ENCODE measurements at regions of chr9 and their contacts with region 1.

Region 1: GRCh38 chr9:35732122-35732799 is at the starts of genes CREB3 and TLN1:
- DNase-seq: peak; percentile 98
- H3K4me3 Mint-ChIP-seq: no peak within 1 kb of the TSS
- H3K27ac Mint-ChIP-seq: peak within 1 kb of the TSS; percentile 85
- H3K4me1 Mint-ChIP-seq: peaks cover 20% of the 10 kb centered on the region
- H3K27me3 Mint-ChIP-seq: no peaks in the 10 kb centered on the region
- total RNA-seq, gene CREB3: 18.1 to 18.3 TPM
- total RNA-seq, gene TLN1: 362 to 422 TPM

Region 2: DNA sequence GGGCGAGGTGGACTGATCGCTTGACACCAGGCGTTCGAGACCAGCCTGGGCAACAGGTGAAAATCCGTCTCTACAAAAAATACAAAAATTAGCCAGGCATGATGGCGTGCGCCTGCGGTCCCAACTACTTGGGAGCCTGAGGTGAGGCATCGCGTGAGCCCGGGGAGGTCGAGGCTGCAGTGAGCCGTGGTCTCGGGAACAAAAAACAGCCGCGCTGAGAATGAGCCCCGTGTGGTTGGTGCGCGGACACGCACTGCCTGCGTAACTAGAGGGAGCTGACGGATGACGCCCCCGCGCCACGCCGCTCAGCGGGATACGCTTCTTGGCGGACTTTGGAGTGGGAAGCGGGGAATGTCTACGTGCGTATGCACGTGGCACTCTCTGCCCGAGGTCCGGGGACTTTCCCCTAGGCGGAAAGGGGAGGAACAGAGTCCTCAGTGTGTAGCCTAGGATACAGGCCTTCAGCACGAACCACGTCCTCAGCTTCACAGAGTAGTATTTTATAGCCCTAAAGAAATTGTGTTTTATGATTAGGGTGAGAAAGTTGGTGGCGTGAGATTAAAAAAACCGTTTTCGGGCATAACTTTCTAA is 74.6 kb before region 1 on chr9 and contains the start of gene RMRP:
- CTCF ChIA-PET with region 1: interaction called, 16 read pairs
- POLR2A ChIA-PET with region 1: no interaction called
- DNase-seq: peak; percentile 91
- H3K4me3 Mint-ChIP-seq: peak within 1 kb of the TSS; percentile 93
- H3K27ac Mint-ChIP-seq: peak within 1 kb of the TSS; percentile 99
- H3K4me1 Mint-ChIP-seq: peaks cover 64% of the 10 kb centered on the region
- H3K27me3 Mint-ChIP-seq: peaks cover 4% of the 10 kb centered on the region
- total RNA-seq, gene RMRP: 1,959 to 11,185 TPM

Region 3: GRCh38 chr9:35664531-35665470 is 67.5 kb before region 1 on chr9 and contains the start of gene ARHGEF39:
- CTCF ChIA-PET with region 1: interaction called, 10 read pairs
- POLR2A ChIA-PET with region 1: interaction called, 3 read pairs
- DNase-seq: peak; percentile 76
- H3K4me3 Mint-ChIP-seq: peak within 1 kb of the TSS; percentile 85
- H3K27ac Mint-ChIP-seq: peak within 1 kb of the TSS; percentile 88
- H3K4me1 Mint-ChIP-seq: peaks cover 64% of the 10 kb centered on the region
- H3K27me3 Mint-ChIP-seq: no peaks in the 10 kb centered on the region
- total RNA-seq, gene ARHGEF39: 11.8 to 13.5 TPM

Region 4: GRCh38 chr9:35696525-35697215 is 35.6 kb before region 1 on chr9:
- CTCF ChIA-PET with region 1: interaction called, 28 read pairs
- POLR2A ChIA-PET with region 1: no interaction called
- DNase-seq: peak; percentile 55
- H3K4me3 Mint-ChIP-seq: no peak overlapping the region
- H3K27ac Mint-ChIP-seq: no peak overlapping the region
- H3K4me1 Mint-ChIP-seq: peaks cover 9% of the 10 kb centered on the region
- H3K27me3 Mint-ChIP-seq: no peaks in the 10 kb centered on the region

Region 5: GRCh38 chr9:35748858-35749514 is 16.7 kb after region 1 on chr9 and contains the starts of genes GBA2 and RGP1:
- CTCF ChIA-PET with region 1: interaction called, 112 read pairs
- POLR2A ChIA-PET with region 1: interaction called, 3 read pairs
- DNase-seq: peak; percentile 68
- H3K4me3 Mint-ChIP-seq: peak within 1 kb of the TSS; percentile 86
- H3K27ac Mint-ChIP-seq: peak within 1 kb of the TSS; percentile 85
- H3K4me1 Mint-ChIP-seq: peaks cover 50% of the 10 kb centered on the region
- H3K27me3 Mint-ChIP-seq: no peaks in the 10 kb centered on the region
- total RNA-seq, gene GBA2: 42.8 to 44.1 TPM
- total RNA-seq, gene RGP1: 24.7 to 28.4 TPM

Region 6: DNA sequence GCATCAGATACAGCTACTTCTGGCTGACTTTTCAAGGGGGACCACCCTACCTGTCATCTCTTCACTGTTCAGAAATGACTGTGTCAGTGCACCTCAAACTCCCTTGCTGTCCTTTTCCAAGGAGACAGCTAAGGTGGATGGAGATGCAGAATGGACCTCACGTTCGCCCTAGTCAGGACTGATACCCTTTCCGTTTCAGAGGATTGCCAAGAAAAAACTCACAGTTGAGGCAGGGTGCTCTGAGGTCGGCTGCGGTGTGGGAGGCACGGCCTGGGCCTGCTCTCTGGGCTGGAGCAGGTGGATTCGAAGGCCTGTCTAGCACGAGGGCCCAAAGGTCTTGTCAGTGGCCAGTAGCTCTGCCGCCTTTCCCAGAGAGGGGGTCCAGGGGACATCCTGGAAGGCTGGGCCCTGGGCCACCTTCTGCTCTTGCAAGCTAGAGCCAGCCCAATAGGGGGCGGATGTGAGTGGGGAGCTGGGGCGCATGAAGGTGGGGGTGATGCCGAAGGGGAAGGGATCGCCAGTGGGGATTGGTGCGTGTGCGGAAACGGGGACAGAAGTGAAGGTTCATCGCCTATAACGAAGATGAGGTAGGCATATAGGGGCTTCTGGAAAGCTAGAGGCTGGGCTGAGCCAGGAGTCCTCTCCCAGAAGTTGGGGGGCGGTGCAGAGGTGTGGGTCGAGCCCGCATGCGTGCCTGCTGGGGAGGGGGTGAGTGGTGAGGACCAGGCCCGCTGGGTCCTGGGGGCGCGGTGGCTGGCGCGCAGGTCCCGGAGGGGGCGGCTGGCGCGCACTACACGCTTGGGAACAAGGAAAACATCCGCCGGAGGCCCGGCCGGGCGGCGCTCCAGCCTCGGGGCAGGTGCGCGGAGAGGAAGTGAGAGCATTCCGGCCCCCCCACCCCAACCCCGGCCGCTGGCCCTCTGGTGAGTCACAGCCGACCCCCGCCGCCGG is 24.3 kb after region 1 on chr9:
- CTCF ChIA-PET with region 1: interaction called, 14 read pairs
- POLR2A ChIA-PET with region 1: no interaction called
- DNase-seq: peak; percentile 83
- H3K4me3 Mint-ChIP-seq: peak overlapping the region; percentile 91
- H3K27ac Mint-ChIP-seq: peak overlapping the region; percentile 94
- H3K4me1 Mint-ChIP-seq: peaks cover 45% of the 10 kb centered on the region
- H3K27me3 Mint-ChIP-seq: no peaks in the 10 kb centered on the region

Measured in activated CD4-positive, alpha-beta T cell treated with anti-CD3 and anti-CD28 coated beads, Interleukin-2, amount 10 ng/mL, durations not matched to agents 7 days and 5 days (primary cell).